ENCODE measurements at regions of chr2 and their contacts with region 1.

Region 1: GRCh38 chr2:25606892-25607291 is 66.5 kb downstream of the DTNB start:
- DNase-seq: peak; percentile 38
- ATAC-seq: no peak
- H3K4me3 Mint-ChIP-seq: no peak overlapping the region
- H3K27ac Mint-ChIP-seq: no peak overlapping the region
- H3K4me1 Mint-ChIP-seq: peaks cover 18% of the 10 kb centered on the region
- H3K27me3 Mint-ChIP-seq: no peaks in the 10 kb centered on the region

Region 2: DNA sequence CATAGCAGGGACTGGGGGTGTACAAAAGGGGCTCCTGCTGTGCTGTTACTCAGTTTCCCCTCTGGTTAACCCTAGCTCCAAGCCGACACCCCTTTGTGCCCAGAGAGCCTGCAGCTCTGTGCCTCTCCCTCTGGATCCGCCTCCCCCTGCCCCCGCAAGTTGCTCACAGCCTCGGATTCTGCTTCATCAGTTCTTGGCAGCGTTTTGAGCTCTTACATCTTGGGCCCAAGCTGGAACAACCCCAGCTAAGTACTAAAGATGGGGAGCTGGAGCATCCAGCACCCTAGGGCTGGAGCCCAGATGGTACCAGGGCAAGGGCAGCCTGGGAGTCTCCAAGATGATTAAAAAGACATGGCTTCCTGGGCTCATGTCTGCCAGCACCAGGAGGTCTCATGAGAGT is 479.2 kb before region 1 on chr2:
- CTCF ChIA-PET with region 1: no interaction called
- POLR2A ChIA-PET with region 1: no interaction called
- DNase-seq: no peak
- ATAC-seq: no peak
- H3K4me3 Mint-ChIP-seq: no peak overlapping the region
- H3K27ac Mint-ChIP-seq: no peak overlapping the region
- H3K4me1 Mint-ChIP-seq: peaks cover 7% of the 10 kb centered on the region
- H3K27me3 Mint-ChIP-seq: peaks cover 22% of the 10 kb centered on the region

Region 3: GRCh38 chr2:25309402-25309801 is 297.5 kb before region 1 on chr2:
- CTCF ChIA-PET with region 1: no interaction called
- POLR2A ChIA-PET with region 1: no interaction called
- DNase-seq: peak; percentile 79
- ATAC-seq: peak; percentile 45
- H3K4me3 Mint-ChIP-seq: no peak overlapping the region
- H3K27ac Mint-ChIP-seq: peak overlapping the region; percentile 37
- H3K4me1 Mint-ChIP-seq: peaks cover 77% of the 10 kb centered on the region
- H3K27me3 Mint-ChIP-seq: no peaks in the 10 kb centered on the region

Region 4: DNA sequence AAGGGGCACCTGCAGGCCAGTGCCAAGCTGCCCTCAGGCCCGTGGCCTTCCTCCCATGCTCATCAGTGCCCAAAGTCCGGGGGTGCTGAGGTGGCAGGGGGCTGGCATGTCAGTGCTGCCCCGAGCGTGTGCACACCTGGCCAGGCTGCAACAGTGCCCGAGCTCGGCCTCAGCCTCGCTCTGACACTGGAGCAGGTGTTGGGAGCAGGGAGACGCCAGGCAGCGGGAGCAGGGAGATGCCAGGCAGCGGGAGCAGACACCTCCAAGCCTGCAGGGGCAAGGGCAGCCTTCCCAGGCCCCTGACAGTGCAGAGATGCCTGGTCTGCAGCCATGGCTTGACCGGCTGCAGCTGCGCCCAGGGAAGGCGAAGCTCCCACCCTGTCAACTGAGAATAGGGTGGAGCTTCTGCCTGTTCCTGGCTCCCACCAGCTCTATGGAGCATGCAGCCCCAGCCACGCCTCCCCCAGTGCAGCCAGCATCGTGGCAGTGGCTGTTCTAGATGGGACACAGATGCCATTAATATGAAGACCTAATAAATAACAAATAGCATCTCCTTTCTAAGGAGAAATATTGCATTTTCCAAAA is 15.9 kb before region 1 on chr2:
- CTCF ChIA-PET with region 1: interaction called, 24 read pairs
- POLR2A ChIA-PET with region 1: no interaction called
- DNase-seq: no peak
- ATAC-seq: no peak
- H3K4me3 Mint-ChIP-seq: no peak overlapping the region
- H3K27ac Mint-ChIP-seq: no peak overlapping the region
- H3K4me1 Mint-ChIP-seq: peaks cover 43% of the 10 kb centered on the region
- H3K27me3 Mint-ChIP-seq: no peaks in the 10 kb centered on the region

Region 5: GRCh38 chr2:25618642-25619037 is 11.7 kb after region 1 on chr2:
- CTCF ChIA-PET with region 1: interaction called, 23 read pairs
- POLR2A ChIA-PET with region 1: no interaction called
- DNase-seq: no peak
- ATAC-seq: no peak
- H3K4me3 Mint-ChIP-seq: no peak overlapping the region
- H3K27ac Mint-ChIP-seq: no peak overlapping the region
- H3K4me1 Mint-ChIP-seq: no peaks in the 10 kb centered on the region
- H3K27me3 Mint-ChIP-seq: no peaks in the 10 kb centered on the region

Region 6: GRCh38 chr2:25690058-25690457 is 83.2 kb after region 1 on chr2:
- CTCF ChIA-PET with region 1: interaction called, 11 read pairs
- POLR2A ChIA-PET with region 1: no interaction called
- DNase-seq: no peak
- ATAC-seq: no peak
- H3K4me3 Mint-ChIP-seq: no peak overlapping the region
- H3K27ac Mint-ChIP-seq: no peak overlapping the region
- H3K4me1 Mint-ChIP-seq: no peaks in the 10 kb centered on the region
- H3K27me3 Mint-ChIP-seq: peaks cover 3% of the 10 kb centered on the region

Region 7: GRCh38 chr2:25714740-25715139 is 107.8 kb after region 1 on chr2:
- CTCF ChIA-PET with region 1: interaction called, 19 read pairs
- POLR2A ChIA-PET with region 1: no interaction called
- DNase-seq: no peak
- ATAC-seq: no peak
- H3K4me3 Mint-ChIP-seq: no peak overlapping the region
- H3K27ac Mint-ChIP-seq: no peak overlapping the region
- H3K4me1 Mint-ChIP-seq: peaks cover 15% of the 10 kb centered on the region
- H3K27me3 Mint-ChIP-seq: peaks cover 15% of the 10 kb centered on the region

Region 8: DNA sequence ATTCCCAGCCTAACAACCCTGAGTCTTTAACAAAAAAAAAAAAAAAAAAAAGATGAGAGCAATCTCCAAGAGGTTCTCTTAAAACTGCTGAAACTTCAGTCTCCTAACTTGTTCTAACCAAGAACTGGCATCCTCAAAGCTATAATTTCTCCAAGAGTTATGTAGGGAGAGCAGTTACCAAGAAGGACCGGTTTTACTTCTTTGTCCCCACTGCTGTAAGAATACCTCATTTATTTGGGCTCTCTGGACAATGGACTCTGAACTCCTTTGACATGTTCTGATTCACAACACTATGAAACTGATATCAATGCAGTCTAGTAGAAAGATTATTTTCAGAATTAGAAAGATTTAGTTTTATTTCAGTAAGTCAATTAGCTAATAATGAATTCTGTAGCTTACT is 151.0 kb after region 1 on chr2:
- CTCF ChIA-PET with region 1: no interaction called
- POLR2A ChIA-PET with region 1: no interaction called
- DNase-seq: no peak
- ATAC-seq: no peak
- H3K4me3 Mint-ChIP-seq: no peak overlapping the region
- H3K27ac Mint-ChIP-seq: no peak overlapping the region
- H3K4me1 Mint-ChIP-seq: peaks cover 21% of the 10 kb centered on the region
- H3K27me3 Mint-ChIP-seq: no peaks in the 10 kb centered on the region

Region 9: GRCh38 chr2:25951071-25951547 is 344.2 kb after region 1 on chr2:
- CTCF ChIA-PET with region 1: interaction called, 12 read pairs
- POLR2A ChIA-PET with region 1: interaction called, 3 read pairs
- DNase-seq: peak; percentile 78
- ATAC-seq: peak; percentile 95
- H3K4me3 Mint-ChIP-seq: no peak overlapping the region
- H3K27ac Mint-ChIP-seq: no peak overlapping the region
- H3K4me1 Mint-ChIP-seq: peaks cover 6% of the 10 kb centered on the region
- H3K27me3 Mint-ChIP-seq: no peaks in the 10 kb centered on the region

Measured in activated CD8-positive, alpha-beta T cell treated with anti-CD3 and anti-CD28 coated beads, Interleukin-2, amount 10 ng/mL, durations not matched to agents 7 days and 5 days (primary cell).